WTC11 (cell line): ENCODE measurements at regions of chr14 and their contacts with region 1.

Region 1: DNA sequence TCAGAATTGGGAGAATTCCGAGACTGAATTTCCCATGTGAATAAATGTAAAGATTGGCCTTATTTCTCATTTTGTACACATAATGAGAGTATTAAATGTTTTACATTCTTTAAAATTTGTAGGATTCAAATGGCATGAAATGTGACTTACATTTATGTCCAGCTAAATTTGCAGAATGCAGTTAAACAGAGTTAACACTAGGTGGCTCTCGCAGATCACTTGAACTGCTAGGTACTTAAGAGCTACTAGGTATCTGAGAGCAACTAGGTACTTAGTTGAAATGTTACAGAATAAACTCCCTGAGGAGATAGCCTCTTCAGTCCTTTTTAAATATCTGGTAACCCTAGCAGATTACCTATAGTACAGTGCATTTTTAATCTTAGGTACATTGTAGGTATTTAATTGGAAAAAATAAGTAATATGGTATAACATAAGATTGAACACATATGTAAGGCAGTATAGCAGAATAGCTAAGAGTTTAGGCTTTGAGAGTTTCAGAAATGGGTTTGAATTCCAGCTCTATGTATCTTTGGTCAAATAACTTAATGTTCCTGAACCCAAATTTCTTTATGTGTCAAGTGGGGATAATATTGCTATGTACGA is 73.8 kb downstream of the KIAA0586 start:
- DNase-seq: no peak
- ATAC-seq: peak; percentile 78
- H3K4me3 Mint-ChIP-seq: no peak overlapping the region
- H3K27ac Mint-ChIP-seq: no peak overlapping the region
- H3K4me1 Mint-ChIP-seq: no peaks in the 10 kb centered on the region
- H3K27me3 Mint-ChIP-seq: no peaks in the 10 kb centered on the region
- CTCF ChIP-seq: peak; percentile 73

Region 2: DNA sequence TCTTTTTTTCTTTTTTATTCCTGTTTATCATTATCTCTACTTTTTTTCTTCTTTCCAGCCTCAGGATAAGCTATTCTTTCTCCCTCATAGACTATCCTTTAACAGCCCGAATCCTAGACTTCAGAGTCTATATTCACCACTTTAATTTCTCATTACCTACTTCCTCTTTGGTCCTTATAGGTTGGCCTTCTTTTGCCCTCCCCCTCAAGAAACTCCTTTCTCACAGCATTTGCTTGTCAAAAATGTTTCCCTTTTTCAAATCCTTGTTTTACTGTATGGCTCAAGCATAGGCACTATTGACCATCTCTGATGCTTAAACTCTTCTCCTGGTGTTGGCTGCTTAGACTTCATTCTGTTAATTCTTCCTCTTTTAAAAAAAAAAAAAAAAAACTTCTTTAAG is 21.3 kb before region 1 on chr14:
- CTCF ChIA-PET with region 1: interaction called, 11 read pairs
- POLR2A ChIA-PET with region 1: no interaction called
- DNase-seq: no peak
- ATAC-seq: no peak
- H3K4me3 Mint-ChIP-seq: no peak overlapping the region
- H3K27ac Mint-ChIP-seq: no peak overlapping the region
- H3K4me1 Mint-ChIP-seq: no peaks in the 10 kb centered on the region
- H3K27me3 Mint-ChIP-seq: no peaks in the 10 kb centered on the region
- CTCF ChIP-seq: no peak

Region 3: GRCh38 chr14:58513272-58513671 is 12.0 kb after region 1 on chr14:
- CTCF ChIA-PET with region 1: interaction called, 13 read pairs
- POLR2A ChIA-PET with region 1: no interaction called
- DNase-seq: no peak
- ATAC-seq: no peak
- H3K4me3 Mint-ChIP-seq: no peak overlapping the region
- H3K27ac Mint-ChIP-seq: no peak overlapping the region
- H3K4me1 Mint-ChIP-seq: no peaks in the 10 kb centered on the region
- H3K27me3 Mint-ChIP-seq: no peaks in the 10 kb centered on the region
- CTCF ChIP-seq: no peak

Region 4: DNA sequence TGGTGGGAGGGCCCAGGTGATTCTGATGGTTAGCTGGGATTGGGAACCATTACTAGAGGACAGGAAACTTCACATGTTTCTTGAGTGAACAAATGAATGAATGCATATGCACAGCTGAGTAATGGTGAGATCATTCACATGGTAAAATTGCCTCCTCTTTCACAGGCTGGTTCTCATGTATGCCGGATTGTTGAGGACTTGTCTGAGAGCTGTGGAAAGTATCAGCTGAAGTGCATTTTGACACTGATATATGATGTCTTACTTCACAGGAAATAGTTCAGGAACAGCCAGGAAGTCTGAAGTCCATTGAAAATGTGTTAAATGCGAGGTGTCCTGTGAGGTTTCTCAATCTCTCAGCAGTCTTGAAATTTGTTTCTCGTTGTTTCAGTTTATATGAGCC is 58.9 kb after region 1 on chr14:
- CTCF ChIA-PET with region 1: interaction called, 13 read pairs
- POLR2A ChIA-PET with region 1: no interaction called
- DNase-seq: no peak
- ATAC-seq: no peak
- H3K4me3 Mint-ChIP-seq: no peak overlapping the region
- H3K27ac Mint-ChIP-seq: no peak overlapping the region
- H3K4me1 Mint-ChIP-seq: peaks cover 18% of the 10 kb centered on the region
- H3K27me3 Mint-ChIP-seq: no peaks in the 10 kb centered on the region
- CTCF ChIP-seq: no peak

Region 5: DNA sequence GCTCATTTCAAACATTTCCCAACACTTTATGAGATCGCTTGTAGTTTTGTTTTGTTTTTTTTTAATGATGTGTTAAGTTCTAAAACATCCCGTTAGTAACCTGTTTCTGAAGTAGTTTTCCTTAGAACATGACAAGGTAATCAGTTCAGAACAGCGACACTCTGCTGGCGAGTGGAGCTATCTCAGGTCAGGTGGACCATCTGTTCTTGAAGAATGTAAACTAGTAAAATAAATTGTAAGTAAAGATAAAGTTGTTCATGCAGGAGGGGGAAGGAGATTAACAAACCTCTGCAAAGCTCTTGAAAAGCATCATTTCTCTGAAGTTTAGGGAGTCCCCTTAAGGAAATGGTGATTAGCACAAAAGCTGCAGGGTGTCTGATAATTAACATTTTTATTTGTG is 64.5 kb after region 1 on chr14:
- CTCF ChIA-PET with region 1: interaction called, 13 read pairs
- POLR2A ChIA-PET with region 1: no interaction called
- DNase-seq: no peak
- ATAC-seq: no peak
- H3K4me3 Mint-ChIP-seq: no peak overlapping the region
- H3K27ac Mint-ChIP-seq: no peak overlapping the region
- H3K4me1 Mint-ChIP-seq: peaks cover 11% of the 10 kb centered on the region
- H3K27me3 Mint-ChIP-seq: no peaks in the 10 kb centered on the region
- CTCF ChIP-seq: no peak

Region 6: GRCh38 chr14:58574623-58575022 is 73.3 kb after region 1 on chr14:
- CTCF ChIA-PET with region 1: interaction called, 44 read pairs
- POLR2A ChIA-PET with region 1: no interaction called
- DNase-seq: no peak
- ATAC-seq: peak; percentile 84
- H3K4me3 Mint-ChIP-seq: no peak overlapping the region
- H3K27ac Mint-ChIP-seq: no peak overlapping the region
- H3K4me1 Mint-ChIP-seq: peaks cover 14% of the 10 kb centered on the region
- H3K27me3 Mint-ChIP-seq: no peaks in the 10 kb centered on the region
- CTCF ChIP-seq: no peak

Region 7: GRCh38 chr14:58637391-58638230 is 136.3 kb after region 1 on chr14 and contains the start of gene DACT1:
- CTCF ChIA-PET with region 1: interaction called, 40 read pairs
- POLR2A ChIA-PET with region 1: interaction called, 3 read pairs
- DNase-seq: peak; percentile 76
- ATAC-seq: peak; percentile 68
- H3K4me3 Mint-ChIP-seq: peak within 1 kb of the TSS; percentile 84
- H3K27ac Mint-ChIP-seq: peak within 1 kb of the TSS; percentile 71
- H3K4me1 Mint-ChIP-seq: peaks cover 65% of the 10 kb centered on the region
- H3K27me3 Mint-ChIP-seq: peaks cover 25% of the 10 kb centered on the region
- CTCF ChIP-seq: no peak
- total RNA-seq, gene DACT1: 19.8 to 21.2 TPM (median 20.2 TPM) in 3 replicates